Breast epithelium (tissue), 4 donors: ENCODE measurements at regions of chr3 and their contacts with region 1.

Region 1: DNA sequence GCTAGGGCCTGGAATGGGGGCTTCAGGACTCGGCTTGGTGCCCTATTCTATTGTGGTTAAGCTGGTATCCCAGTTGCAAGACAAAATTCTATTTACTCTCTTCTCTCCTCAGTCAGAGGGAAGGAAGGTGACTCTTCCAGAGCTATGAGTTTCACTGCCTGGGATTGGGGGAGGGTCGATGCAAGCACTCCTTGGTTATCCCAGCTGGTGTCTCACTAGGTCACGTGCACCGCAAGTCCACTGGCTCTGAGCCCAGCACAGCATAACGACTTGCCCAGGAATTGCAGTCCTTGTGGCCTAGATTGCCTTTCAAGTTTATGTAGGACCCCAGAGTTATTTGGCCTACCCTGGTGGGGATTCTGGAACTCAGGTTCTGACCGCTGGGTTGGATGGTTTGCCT is 958.8 kb downstream of the IGSF11 start:
- DNase-seq: no peak
- H3K4me3 ChIP-seq: no peak overlapping the region
- H3K27ac ChIP-seq: no peak overlapping the region
- H3K4me1 ChIP-seq: no peaks in the 10 kb centered on the region
- H3K27me3 ChIP-seq: no peaks in the 10 kb centered on the region
- CTCF ChIP-seq: no peak
- POLR2A ChIP-seq: no peak

Region 2: DNA sequence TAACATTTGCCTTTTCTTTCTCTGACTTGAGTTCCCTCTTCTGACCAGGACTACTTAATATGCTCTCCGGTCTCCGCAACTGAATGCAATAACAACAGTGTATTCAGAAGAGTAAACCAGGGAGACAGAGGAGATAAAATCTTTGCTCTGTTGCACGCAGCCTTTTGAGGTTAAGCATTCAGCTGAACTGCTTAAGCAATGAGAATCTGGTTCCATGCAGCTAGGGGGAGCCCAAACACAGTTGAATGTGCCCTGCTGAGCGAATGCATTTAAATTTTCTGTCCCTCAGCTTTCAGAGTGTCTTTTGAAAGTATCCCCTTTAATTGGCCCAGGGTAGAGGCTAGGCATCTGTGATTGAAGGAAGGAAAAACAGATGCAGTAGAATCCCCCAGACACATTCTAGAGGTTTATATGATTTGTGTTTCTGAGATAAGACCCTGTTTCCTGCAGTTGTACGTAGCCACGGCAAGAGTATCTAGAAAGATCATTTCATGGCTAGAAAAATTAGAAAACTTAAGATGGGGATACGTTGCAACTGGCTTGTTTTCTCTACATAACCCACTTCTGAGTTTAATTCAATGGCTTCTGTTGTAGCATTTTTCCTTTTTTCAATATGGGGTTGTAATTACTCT is 1056.7 kb before region 1 on chr3:
- intact Hi-C with region 1: no loop called
- DNase-seq: peak; percentile 26 to 56
- H3K4me3 ChIP-seq: peak overlapping the region in 1 of 3 donors; percentile 15
- H3K27ac ChIP-seq: no peak overlapping the region
- H3K4me1 ChIP-seq: no peaks in the 10 kb centered on the region
- H3K27me3 ChIP-seq: no peaks in the 10 kb centered on the region
- CTCF ChIP-seq: peak in 2 of 3 donors; percentile 49 to 78
- POLR2A ChIP-seq: no peak

Region 3: GRCh38 chr3:117252208-117252607 is 823.7 kb before region 1 on chr3:
- intact Hi-C with region 1: no loop called
- DNase-seq: no peak
- H3K4me3 ChIP-seq: no peak overlapping the region
- H3K27ac ChIP-seq: no peak overlapping the region
- H3K4me1 ChIP-seq: no peaks in the 10 kb centered on the region
- H3K27me3 ChIP-seq: no peaks in the 10 kb centered on the region
- CTCF ChIP-seq: no peak
- POLR2A ChIP-seq: no peak

Region 4: DNA sequence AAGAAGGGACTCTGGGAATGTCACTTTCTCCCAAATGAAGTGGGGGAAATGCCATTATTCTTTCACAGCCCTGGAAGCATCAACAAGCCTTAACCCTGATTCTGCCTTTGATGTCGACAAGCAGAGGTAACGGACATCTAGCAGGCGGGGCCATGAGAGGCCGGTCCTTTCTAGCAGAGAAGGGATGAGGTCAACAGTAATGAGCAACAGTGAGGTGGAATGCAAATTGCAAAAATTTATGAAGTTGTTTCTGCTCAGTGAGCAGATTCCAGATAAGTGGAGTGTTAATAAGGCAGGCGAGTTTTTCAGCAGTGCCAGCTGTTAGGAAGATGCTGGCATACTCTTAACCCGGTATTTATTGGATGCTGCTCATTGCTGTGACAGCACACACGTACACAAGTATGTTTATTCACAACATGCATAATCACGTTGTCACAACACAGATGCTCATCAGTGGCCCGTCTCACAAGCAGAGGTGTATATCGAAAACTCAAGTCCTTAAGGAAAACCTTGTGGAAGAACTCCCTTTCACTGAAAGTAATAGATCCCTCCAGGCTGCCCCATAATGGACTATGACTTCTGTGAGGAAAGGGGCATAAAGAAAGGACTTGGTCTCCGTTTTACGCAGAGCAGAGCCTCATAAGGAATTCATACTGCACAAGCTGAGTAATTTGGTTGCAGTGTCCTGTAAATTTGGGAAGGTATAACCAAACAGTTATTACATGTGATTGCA is 629.8 kb after region 1 on chr3:
- intact Hi-C with region 1: loop called (anchors 5 kb)
- DNase-seq: no peak
- H3K4me3 ChIP-seq: no peak overlapping the region
- H3K27ac ChIP-seq: no peak overlapping the region
- H3K4me1 ChIP-seq: no peaks in the 10 kb centered on the region
- H3K27me3 ChIP-seq: no peaks in the 10 kb centered on the region
- CTCF ChIP-seq: no peak
- POLR2A ChIP-seq: no peak